Breast epithelium (tissue), 4 donors: ENCODE measurements at regions of chr13 and their contacts with region 1.

Region 1: GRCh38 chr13:99176309-99177276 is 24.1 kb upstream of the UBAC2 start:
- DNase-seq: peak; percentile 31 to 77
- H3K4me3 ChIP-seq: no peak overlapping the region
- H3K27ac ChIP-seq: no peak overlapping the region
- H3K4me1 ChIP-seq: no peaks in the 10 kb centered on the region
- H3K27me3 ChIP-seq: no peaks in the 10 kb centered on the region
- CTCF ChIP-seq: peak; percentile 52 to 89 (median 85)
- POLR2A ChIP-seq: no peak

Region 2: DNA sequence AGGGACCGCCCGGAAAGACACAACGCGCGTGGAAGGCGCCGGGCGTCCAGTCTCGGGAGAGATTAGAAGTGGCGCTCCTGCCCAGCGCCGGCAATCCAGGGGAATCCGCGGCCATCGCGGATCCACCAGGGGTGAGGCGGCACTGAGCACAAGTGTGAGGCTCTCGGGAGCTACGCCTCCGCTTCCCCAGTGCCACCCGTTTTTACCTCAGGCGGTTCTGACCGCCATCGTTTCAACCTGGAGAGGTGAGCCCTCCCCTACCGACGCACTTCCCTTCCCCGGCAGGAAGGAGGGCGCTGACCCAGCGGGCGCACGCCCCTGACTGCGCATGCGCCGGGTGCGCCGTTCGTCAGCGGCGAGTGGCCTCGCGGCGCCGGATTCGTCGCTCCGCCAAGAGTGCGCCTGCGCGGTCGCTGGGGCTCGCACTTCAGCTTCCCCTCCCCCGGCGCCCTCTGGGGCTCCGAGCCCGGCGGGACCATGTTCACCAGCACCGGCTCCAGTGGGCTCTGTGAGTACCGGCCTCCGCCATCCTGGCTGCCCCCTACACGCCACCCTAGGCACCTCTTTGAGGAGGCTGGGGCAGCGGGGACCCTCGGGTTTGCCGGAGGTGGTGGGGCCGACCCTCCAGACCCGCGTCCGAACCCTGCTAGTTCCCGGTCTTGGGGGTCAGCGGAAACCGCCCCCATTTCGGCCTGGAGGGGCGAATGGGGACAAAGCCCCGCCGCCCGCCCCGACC is 24.0 kb after region 1 on chr13 and contains the start of gene UBAC2:
- intact Hi-C with region 1: no loop called
- DNase-seq: peak; percentile 92 to 94
- H3K4me3 ChIP-seq: peak within 1 kb of the TSS; percentile 80 to 98 (median 94)
- H3K27ac ChIP-seq: peak within 1 kb of the TSS; percentile 99 to 100
- H3K4me1 ChIP-seq: no peaks in the 10 kb centered on the region
- H3K27me3 ChIP-seq: no peaks in the 10 kb centered on the region
- CTCF ChIP-seq: peak in 1 of 3 donors; percentile 33
- POLR2A ChIP-seq: peak; percentile 94
- total RNA-seq, gene UBAC2: 64.6 to 72.8 (median 65.1) TPM

Region 3: DNA sequence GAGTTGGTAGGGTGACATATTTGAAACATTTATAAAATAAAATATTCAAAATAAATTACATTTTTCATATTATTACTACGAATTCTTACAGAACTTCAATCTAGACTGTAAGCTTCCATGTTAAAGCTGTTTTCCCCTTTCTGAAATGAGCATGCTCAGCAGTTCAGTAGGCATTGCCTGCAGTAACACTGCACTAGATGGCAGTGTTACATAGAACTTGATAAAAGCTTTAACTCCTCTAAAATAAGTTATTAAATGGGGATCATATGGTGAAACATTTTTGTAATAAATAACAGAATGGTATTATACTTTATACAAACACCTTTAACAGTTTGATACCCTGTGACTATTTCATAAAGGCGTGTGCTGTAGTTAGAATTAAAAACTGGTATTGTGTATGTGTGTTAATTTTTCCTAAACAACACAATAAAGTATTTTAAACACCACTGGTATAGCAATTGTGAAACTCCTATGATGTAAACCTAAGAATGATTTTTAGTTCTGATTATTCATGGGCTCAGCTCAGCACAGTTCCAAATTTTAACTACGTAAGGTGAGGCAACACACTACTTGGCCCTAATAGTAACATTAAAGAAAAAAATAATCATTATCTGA is 93.1 kb after region 1 on chr13:
- intact Hi-C with region 1: loop called (anchors 5 kb)
- DNase-seq: no peak
- H3K4me3 ChIP-seq: no peak overlapping the region
- H3K27ac ChIP-seq: no peak overlapping the region
- H3K4me1 ChIP-seq: no peaks in the 10 kb centered on the region
- H3K27me3 ChIP-seq: no peaks in the 10 kb centered on the region
- CTCF ChIP-seq: peak in 2 of 3 donors; percentile 46 to 52
- POLR2A ChIP-seq: no peak

Region 4: GRCh38 chr13:99436686-99437416 is 260.3 kb after region 1 on chr13:
- intact Hi-C with region 1: loop called (anchors 10 kb)
- DNase-seq: peak; percentile 64 to 85
- H3K4me3 ChIP-seq: peak overlapping the region in 1 of 3 donors; percentile 32
- H3K27ac ChIP-seq: no peak overlapping the region
- H3K4me1 ChIP-seq: no peaks in the 10 kb centered on the region
- H3K27me3 ChIP-seq: peaks cover 0 to 3% of the 10 kb centered on the region in 2 donors
- CTCF ChIP-seq: peak; percentile 99 to 100 (median 99)
- POLR2A ChIP-seq: no peak